Activated naive CD4-positive, alpha-beta T cell treated with anti-CD3 and anti-CD28 coated beads for 36 hours (primary cell): ENCODE measurements at regions of chr6 and their contacts with region 1.

Region 1: GRCh38 chr6:100455230-100456124 is 9.2 kb downstream of the SIM1 start:
- DNase-seq: no peak
- H3K4me3 Mint-ChIP-seq: no peak overlapping the region
- H3K27ac Mint-ChIP-seq: no peak overlapping the region
- H3K4me1 Mint-ChIP-seq: no peaks in the 10 kb centered on the region
- H3K27me3 Mint-ChIP-seq: peaks cover 68% of the 10 kb centered on the region

Region 2: GRCh38 chr6:98871057-98871456 is 1584.4 kb before region 1 on chr6:
- CTCF ChIA-PET with region 1: no interaction called
- intact Hi-C with region 1: no loop called
- DNase-seq: no peak
- H3K4me3 Mint-ChIP-seq: no peak overlapping the region
- H3K27ac Mint-ChIP-seq: no peak overlapping the region
- H3K4me1 Mint-ChIP-seq: no peaks in the 10 kb centered on the region
- H3K27me3 Mint-ChIP-seq: no peaks in the 10 kb centered on the region

Region 3: DNA sequence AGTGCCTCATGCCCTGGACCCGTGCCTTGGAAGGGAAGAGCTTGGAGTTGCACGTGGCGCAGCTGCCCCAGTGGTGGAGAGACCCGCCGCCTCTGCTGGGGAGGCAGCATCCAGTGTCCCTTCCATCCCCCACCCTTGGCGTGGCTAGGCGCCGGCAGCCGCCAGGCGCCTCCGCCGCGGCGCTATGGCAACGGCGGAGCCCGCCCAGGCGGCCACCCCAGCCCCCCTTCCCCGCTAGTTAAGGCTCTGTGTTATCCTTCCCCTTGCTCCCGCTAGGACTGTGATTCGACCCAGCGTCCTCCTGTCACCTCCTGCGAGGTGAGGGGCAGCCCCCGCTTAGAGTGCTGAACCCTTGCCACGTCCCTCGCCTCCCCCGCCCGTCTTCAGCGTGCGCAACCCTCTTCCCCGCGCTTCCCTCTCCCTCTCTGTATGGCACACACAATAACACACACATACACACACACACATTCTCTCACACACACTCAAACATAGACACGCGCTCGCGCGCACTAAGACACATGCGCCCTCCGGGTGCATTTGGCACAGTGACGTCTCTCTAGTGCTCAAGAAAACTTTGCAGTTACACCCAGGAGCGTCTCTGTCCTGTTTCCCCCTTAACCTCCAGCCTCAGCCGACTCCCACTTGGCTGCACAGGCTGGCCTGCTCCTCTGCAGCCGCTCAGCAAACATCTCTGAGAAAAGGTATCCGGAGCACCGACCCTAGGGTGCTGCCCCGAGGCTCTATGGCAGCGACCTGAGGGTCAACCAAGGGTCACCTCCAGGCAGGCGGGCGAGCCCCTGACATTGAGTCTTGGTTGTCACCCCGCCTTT is 946.5 kb after region 1 on chr6:
- CTCF ChIA-PET with region 1: no interaction called
- intact Hi-C with region 1: loop called (anchors 5 kb)
- DNase-seq: no peak
- H3K4me3 Mint-ChIP-seq: no peak overlapping the region
- H3K27ac Mint-ChIP-seq: no peak overlapping the region
- H3K4me1 Mint-ChIP-seq: no peaks in the 10 kb centered on the region
- H3K27me3 Mint-ChIP-seq: peaks cover 62% of the 10 kb centered on the region

Region 4: GRCh38 chr6:101806241-101806640 is 1350.8 kb after region 1 on chr6:
- CTCF ChIA-PET with region 1: no interaction called
- intact Hi-C with region 1: no loop called
- DNase-seq: no peak
- H3K4me3 Mint-ChIP-seq: no peak overlapping the region
- H3K27ac Mint-ChIP-seq: no peak overlapping the region
- H3K4me1 Mint-ChIP-seq: no peaks in the 10 kb centered on the region
- H3K27me3 Mint-ChIP-seq: no peaks in the 10 kb centered on the region